ENCODE measurements at regions of chr15 and their contacts with region 1.

Region 1: DNA sequence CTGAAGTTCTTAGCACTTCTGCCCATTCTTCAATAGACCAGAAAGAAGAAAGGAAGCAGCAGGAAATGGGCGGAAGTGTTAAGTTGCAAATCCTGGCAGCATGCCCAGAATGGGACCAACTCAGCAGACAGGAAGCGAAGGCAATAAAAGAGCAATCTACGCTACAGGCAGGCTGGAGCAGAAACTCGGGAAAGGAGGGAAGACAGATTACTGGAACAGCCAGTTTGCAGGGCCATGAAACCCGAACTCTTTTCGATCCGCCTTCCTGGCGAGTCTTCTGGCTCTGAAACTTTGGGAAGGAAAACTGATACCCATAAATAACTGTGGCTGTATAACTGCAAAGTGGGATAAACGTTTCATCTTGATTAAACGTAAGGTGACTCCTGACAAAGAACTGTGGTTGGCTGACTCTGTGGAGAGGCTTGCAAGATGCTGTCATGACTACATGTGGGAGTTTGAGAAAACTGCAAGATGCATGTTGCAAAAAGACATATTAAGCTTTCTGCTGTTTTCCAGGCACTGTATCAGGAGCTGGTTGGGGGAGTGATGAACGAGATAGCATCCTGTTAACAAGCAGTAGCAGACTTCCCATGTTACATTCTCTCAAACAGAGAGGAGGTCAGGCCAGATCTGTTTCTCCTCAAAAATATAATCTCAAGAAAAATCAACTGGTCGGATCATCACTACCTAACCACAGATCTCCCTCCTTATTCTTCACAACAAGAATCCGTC is 67.8 kb downstream of the FMN1 start:
- DNase-seq: peak; percentile 89

Region 2: GRCh38 chr15:33021806-33022389 is 104.8 kb before region 1 on chr15:
- intact Hi-C with region 1: loop called (anchors 10 kb)
- DNase-seq: no peak

Region 3: GRCh38 chr15:33091983-33092693 is 34.6 kb before region 1 on chr15:
- intact Hi-C with region 1: loop called (anchors 1 to 10 kb)
- DNase-seq: no peak

Region 4: GRCh38 chr15:33104212-33104611 is 22.5 kb before region 1 on chr15:
- intact Hi-C with region 1: no loop called
- DNase-seq: no peak

Region 5: DNA sequence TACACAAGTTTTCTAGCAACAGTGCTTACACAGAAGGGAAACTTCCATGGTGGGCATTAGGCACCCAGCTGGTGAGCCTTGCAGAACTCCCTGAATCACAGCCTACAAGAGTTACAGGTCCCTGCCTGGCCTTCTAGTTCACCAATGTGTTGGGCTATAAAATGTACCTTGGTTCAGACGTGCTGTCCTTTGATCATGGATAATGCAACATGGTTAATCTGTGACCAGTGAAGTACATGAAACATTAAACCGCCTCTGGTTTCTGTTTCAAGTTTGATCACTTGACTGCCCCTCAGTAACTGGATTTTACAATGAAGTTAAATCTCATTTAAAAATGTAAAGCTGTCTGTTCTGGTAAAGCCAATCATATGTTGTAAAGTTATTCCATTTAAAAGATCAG is 16.0 kb after region 1 on chr15:
- intact Hi-C with region 1: no loop called
- DNase-seq: no peak

Region 6: DNA sequence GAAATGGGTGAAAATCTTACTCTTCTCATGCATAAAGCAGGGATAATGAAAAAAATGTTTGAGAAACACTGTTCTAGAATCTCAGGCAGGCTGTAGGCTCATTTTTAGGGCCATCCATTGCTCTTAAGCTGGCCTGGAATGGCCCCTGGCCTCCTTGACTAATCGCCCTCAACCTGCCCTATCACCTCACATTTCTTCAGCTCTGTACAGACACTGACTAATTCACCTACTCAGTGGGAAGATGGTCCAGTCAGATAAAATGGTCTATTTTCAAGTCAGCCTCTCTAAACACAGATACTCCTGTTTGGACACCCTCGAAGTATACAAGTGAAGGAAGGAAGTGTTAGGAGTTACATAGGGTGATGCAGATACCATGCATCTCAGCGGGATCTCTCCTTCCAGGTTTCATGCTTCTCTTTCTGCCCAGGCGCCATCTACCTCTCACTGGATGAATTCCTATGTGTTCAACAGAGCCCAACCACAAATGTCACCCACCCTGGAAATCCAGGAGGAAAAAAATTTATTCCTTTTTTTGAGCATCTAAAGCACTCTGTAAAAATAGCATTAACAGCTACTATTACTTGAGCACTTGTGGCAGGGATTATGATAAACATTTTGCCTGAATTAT is 55.7 kb after region 1 on chr15:
- intact Hi-C with region 1: no loop called
- DNase-seq: no peak

Measured in posterior vena cava (tissue), 2 donors.